Motor neuron (in vitro differentiated cells): ENCODE measurements at regions of chr10 and their contacts with region 1.

Region 1: DNA sequence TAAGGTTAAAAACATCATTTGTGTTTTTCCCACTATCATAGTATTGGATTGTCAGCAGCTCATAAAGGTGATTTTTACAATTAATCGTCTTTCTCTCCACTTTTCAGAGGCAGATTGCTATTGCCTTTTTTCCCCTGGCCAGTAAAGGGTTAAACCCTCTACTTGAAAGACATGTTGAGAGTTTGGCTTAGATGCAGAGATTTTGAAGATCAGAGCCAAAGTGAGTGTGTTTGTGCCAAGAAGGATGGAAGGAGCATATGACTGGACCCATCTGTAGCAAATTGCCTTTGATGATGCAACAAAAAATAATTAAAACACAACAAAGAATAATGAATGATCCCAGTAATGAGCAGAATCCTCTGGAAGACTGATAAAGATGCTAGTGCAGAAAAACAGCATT is 373.1 kb downstream of the MALRD1 start:
- ATAC-seq: no peak
- H3K4me3 ChIP-seq: no peak overlapping the region
- H3K27ac ChIP-seq: no peak overlapping the region
- H3K4me1 ChIP-seq: no peaks in the 10 kb centered on the region

Region 2: GRCh38 chr10:18968181-18968580 is 453.5 kb before region 1 on chr10:
- in situ Hi-C with region 1: no loop called
- ATAC-seq: no peak
- H3K4me3 ChIP-seq: no peak overlapping the region
- H3K27ac ChIP-seq: no peak overlapping the region
- H3K4me1 ChIP-seq: no peaks in the 10 kb centered on the region

Region 3: GRCh38 chr10:19788075-19788686 is 366.5 kb after region 1 on chr10:
- in situ Hi-C with region 1: loop called in 1 of 9 experiments (anchors 5 kb)
- ATAC-seq: peak in 3 of 8 experiments; percentile 35 to 47 (median 46)
- H3K4me3 ChIP-seq: no peak overlapping the region
- H3K27ac ChIP-seq: no peak overlapping the region
- H3K4me1 ChIP-seq: no peaks in the 10 kb centered on the region